ENCODE measurements at regions of chr6 and their contacts with region 1.

Region 1: GRCh38 chr6:158910484-158911348 is 89.3 kb downstream of the RSPH3 start:
- DNase-seq: peak; percentile 63 to 94
- H3K4me3 ChIP-seq: peak overlapping the region; percentile 51
- H3K27ac ChIP-seq: peak overlapping the region; percentile 97
- H3K4me1 ChIP-seq: peaks cover 46% of the 10 kb centered on the region
- H3K27me3 ChIP-seq: no peaks in the 10 kb centered on the region
- CTCF ChIP-seq: no peak

Region 2: DNA sequence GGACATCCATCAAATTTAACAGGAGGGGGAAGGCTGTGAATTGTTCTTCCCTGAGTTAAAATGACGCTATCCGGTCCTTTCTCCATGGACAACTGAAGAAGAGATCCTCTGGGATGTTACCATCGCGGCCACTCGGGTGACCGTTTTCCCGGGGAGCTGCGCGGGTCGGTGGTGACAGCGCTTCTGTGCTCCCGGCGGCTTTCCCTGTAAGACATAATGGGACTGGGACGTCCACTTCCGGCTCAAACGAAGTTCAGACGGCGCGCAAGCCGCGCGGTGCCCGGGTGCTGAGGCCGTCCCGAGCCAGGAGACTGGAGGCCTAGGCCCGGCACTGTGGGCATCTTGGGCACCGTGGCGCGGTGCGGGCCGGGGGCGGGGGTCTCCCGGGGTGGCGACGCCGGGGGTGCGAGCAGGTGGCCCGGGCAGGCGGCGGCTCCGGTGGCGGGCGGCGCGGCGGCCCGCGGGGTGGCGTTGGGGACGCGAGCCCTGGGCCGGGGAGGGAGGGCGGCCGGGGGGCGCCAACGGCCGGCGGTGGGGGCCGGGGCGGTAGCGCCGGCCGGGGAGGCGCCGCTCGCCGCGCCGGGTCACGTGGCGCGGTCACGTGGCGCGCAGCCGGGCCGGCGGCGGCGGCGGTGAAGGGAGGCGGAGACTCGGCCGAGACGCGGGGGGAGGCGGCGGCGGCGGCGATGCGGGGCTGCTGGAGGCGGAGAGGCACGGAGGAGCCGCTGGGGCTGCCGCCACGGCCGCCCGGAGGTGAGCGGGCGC is 679.0 kb before region 1 on chr6:
- CTCF ChIA-PET with region 1: no interaction called
- POLR2A ChIA-PET with region 1: no interaction called
- intact Hi-C with region 1: no loop called
- DNase-seq: peak; percentile 51 to 56
- H3K4me3 ChIP-seq: peak overlapping the region; percentile 61
- H3K27ac ChIP-seq: peak overlapping the region; percentile 60
- H3K4me1 ChIP-seq: peaks cover 20% of the 10 kb centered on the region
- H3K27me3 ChIP-seq: no peaks in the 10 kb centered on the region
- CTCF ChIP-seq: no peak

Region 3: DNA sequence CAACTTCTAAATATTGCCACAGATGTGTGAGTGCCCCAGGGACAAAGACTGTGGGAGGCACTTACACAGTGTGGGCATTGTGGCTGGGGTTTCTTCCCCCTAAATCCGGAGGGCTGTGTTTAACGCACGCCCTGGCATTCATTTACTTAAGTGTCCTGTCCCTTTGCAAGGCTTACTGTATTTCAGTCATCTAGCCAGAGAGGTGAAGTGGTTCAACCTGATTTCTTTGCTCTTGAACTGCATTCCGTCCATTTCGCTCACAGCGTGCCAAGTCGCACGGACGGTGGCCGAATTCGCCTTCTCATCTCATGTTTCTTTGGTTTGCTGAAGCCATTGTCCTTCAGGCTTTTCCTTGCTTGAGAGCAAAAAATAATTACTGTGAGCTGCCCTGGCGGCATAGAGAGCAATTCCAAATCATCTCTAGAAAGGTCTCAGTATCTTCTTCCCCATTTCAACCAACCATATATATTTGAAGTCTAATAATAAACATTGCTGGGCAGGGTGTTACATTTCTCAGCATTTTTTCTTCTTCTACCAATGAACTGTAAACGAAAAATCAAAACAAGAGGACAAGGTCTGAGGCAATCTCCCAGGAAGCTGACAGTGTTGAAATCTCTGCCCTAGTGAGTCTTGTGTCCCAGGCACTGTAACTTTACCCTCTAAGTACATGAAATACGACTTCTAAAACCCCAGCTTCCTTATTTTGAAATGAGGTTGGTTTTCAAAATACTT is 243.9 kb before region 1 on chr6:
- CTCF ChIA-PET with region 1: no interaction called
- POLR2A ChIA-PET with region 1: no interaction called
- intact Hi-C with region 1: no loop called
- DNase-seq: peak; percentile 68 to 95
- H3K4me3 ChIP-seq: peak overlapping the region; percentile 46; the same call in 1 of the 2 replicates
- H3K27ac ChIP-seq: peak overlapping the region; percentile 98
- H3K4me1 ChIP-seq: peaks cover 76% of the 10 kb centered on the region
- H3K27me3 ChIP-seq: no peaks in the 10 kb centered on the region
- CTCF ChIP-seq: no peak

Region 4: GRCh38 chr6:158819213-158819909 is 91.4 kb before region 1 on chr6 and contains the start of gene EZR:
- CTCF ChIA-PET with region 1: no interaction called
- POLR2A ChIA-PET with region 1: no interaction called
- intact Hi-C with region 1: loop called (anchors 5 kb)
- DNase-seq: peak; percentile 63 to 75
- H3K4me3 ChIP-seq: peak within 1 kb of the TSS; percentile 86
- H3K27ac ChIP-seq: peak within 1 kb of the TSS; percentile 92
- H3K4me1 ChIP-seq: peaks cover 30% of the 10 kb centered on the region
- H3K27me3 ChIP-seq: no peaks in the 10 kb centered on the region
- CTCF ChIP-seq: peak; percentile 37; the same call in 1 of the 2 replicates
- total RNA-seq, gene EZR: 231 and 240 TPM in 2 replicates

Region 5: GRCh38 chr6:158869826-158870648 is 40.7 kb before region 1 on chr6:
- CTCF ChIA-PET with region 1: no interaction called
- POLR2A ChIA-PET with region 1: interaction called, 11 read pairs
- intact Hi-C with region 1: loop called (anchors 1 kb)
- DNase-seq: peak; percentile 87 to 99
- H3K4me3 ChIP-seq: peak overlapping the region; percentile 52
- H3K27ac ChIP-seq: peak overlapping the region; percentile 98
- H3K4me1 ChIP-seq: peaks cover 48% of the 10 kb centered on the region
- H3K27me3 ChIP-seq: no peaks in the 10 kb centered on the region
- CTCF ChIP-seq: peak; percentile 33; the same call in 1 of the 2 replicates

Region 6: GRCh38 chr6:158923805-158924498 is 13.2 kb after region 1 on chr6:
- CTCF ChIA-PET with region 1: no interaction called
- POLR2A ChIA-PET with region 1: interaction called, 16 read pairs
- intact Hi-C with region 1: no loop called
- DNase-seq: no peak
- H3K4me3 ChIP-seq: no peak overlapping the region
- H3K27ac ChIP-seq: no peak overlapping the region
- H3K4me1 ChIP-seq: peaks cover 15% of the 10 kb centered on the region
- H3K27me3 ChIP-seq: no peaks in the 10 kb centered on the region
- CTCF ChIP-seq: no peak

Measured in PC-9 (cell line).